AG04450 (cell line): ENCODE measurements at regions of chr5 and their contacts with region 1.

Region 1: DNA sequence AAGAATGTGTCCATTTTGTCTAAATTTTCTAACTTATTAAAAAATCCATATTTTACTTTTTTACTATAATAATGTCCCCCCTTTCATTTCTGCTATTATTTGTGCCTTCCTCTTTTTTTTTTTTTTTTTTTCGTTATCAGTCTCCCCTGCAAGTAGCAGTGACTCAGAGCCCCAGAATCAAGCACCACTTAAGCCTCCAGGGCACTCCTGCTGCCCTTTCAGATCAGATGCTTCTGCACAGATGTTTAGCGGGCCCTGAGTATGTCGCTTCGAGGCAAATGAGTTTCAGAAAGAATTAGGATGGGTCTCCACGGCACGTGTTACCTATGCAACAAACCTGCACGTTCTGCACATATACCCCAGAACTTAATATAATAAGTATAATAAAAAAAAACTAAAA is 11.7 kb downstream of the MED7 start:
- DNase-seq: no peak
- H3K4me3 ChIP-seq: no peak overlapping the region
- H3K27ac ChIP-seq: no peak overlapping the region
- H3K27me3 ChIP-seq: no peaks in the 10 kb centered on the region
- CTCF ChIP-seq: no peak

Region 2: DNA sequence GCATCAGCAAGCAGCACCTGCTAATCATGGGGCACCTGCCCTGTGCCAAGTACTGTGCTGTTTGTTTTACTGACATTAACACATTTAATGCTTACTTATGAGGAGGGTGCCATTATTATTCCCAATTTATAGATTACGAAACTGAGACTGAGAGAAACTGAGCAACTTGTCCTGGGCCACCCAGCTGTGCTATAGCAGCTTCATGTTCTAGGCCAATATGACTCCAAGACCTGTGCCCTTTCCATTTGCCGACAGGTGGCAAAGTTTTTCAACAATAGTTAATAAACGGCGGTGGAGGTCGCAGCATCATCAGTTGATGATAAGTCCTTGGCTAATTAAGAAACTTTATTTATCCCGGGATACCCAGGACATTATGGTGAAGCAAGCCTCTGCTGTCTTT is 223.3 kb before region 1 on chr5:
- CTCF ChIA-PET with region 1: no interaction called
- POLR2A ChIA-PET with region 1: no interaction called
- DNase-seq: no peak
- H3K4me3 ChIP-seq: no peak overlapping the region
- H3K27ac ChIP-seq: no peak overlapping the region
- H3K27me3 ChIP-seq: no peaks in the 10 kb centered on the region
- CTCF ChIP-seq: no peak

Region 3: GRCh38 chr5:157142317-157143126 is 11.6 kb after region 1 on chr5 and contains the start of gene MED7:
- CTCF ChIA-PET with region 1: interaction called, 28 read pairs
- POLR2A ChIA-PET with region 1: interaction called, 6 read pairs
- DNase-seq: peak; percentile 98
- H3K4me3 ChIP-seq: peak within 1 kb of the TSS; percentile 98
- H3K27ac ChIP-seq: peak within 1 kb of the TSS; percentile 92
- H3K27me3 ChIP-seq: no peaks in the 10 kb centered on the region
- CTCF ChIP-seq: no peak
- polyA plus RNA-seq, gene MED7: 12.9 and 16.4 TPM in 2 replicates

Region 4: DNA sequence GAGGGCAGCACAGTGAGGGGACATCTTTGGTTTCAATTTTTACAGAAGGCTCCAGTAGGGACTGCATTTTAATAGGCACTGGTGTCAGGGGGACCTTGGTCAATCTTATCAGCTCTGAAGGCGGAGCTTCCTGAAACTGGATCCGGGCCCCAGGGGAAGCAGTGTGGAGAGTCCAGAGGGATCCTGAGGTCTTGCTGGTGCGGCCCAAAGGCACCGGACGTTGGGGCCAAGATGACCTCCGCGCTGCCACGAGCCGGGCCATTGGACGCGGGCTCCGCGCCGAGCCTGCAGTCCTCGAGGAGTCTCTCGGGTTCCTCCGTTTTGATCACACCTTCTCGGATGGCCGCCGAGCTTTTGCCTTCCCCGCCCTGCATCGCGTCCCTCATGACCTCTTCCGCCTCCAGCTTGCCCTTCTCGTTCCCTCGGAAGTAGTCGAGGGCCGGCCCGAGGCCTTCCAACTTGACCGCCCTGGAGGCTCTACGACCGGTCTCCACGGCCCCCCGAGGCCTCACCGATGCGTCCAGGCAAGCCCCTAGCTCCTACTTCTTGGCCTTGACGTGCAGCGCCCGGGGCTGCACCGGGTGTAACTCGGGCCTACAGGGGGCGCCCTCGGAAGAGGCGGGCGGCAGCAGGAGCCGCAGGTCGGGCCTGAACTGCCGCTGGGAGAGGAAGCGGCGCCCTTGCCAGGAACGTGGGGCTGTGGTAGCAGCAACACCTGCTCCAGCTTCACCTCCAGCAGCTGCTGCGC is 559.2 kb after region 1 on chr5:
- CTCF ChIA-PET with region 1: no interaction called
- POLR2A ChIA-PET with region 1: no interaction called
- DNase-seq: no peak
- H3K4me3 ChIP-seq: no peak overlapping the region
- H3K27ac ChIP-seq: no peak overlapping the region
- H3K27me3 ChIP-seq: no peaks in the 10 kb centered on the region
- CTCF ChIP-seq: 0 out of 2 replicates have a peak, but pooled peaks have one; percentile 17